Activated naive CD4-positive, alpha-beta T cell treated with anti-CD3 and anti-CD28 coated beads for 36 hours (primary cell): ENCODE measurements at regions of chr18 and their contacts with region 1.

Region 1: DNA sequence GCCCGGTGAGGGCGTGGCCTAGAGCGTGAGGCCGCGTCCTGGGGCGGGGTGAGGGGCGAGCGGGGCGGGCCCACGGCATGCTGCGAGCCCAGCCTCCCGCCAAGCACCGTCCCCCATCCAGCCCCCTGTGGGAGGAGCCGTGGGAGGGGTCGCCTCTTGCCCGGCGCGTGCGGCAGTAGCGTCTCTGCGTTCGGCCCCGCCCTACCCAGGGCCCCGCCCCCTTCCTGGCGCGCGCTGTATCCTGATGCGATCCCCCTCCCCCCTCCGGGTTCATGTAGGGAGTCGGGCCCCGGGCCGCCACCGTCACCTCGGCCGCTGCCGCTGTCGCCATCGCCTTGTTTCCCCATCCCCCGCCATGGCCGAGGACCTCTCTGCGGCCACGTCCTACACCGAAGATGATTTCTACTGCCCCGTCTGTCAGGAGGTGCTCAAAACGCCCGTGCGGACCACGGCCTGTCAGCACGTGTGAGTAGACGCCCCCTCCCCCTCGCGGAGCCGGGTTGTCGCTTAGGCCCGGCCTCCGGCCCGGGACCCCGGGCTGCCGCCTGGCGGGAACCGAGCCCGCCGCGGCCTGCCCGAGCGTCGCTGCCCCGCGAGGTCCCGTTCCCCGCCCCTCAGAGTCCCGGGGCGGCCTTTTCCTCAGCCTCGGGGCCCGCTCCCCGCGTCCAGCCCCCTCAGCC is 888 bp downstream of the RNF138 start:
- DNase-seq: peak; percentile 99
- H3K4me3 Mint-ChIP-seq: peak overlapping the region; percentile 97
- H3K27ac Mint-ChIP-seq: peak overlapping the region; percentile 98
- H3K4me1 Mint-ChIP-seq: peaks cover 42% of the 10 kb centered on the region
- H3K27me3 Mint-ChIP-seq: no peaks in the 10 kb centered on the region

Region 2: GRCh38 chr18:31497837-31498573 is 594.6 kb before region 1 on chr18 and contains the start of gene DSG2:
- CTCF ChIA-PET with region 1: no interaction called
- intact Hi-C with region 1: loop called (anchors 10 kb)
- DNase-seq: peak; percentile 39
- H3K4me3 Mint-ChIP-seq: peak within 1 kb of the TSS; percentile 73
- H3K27ac Mint-ChIP-seq: no peak within 1 kb of the TSS
- H3K4me1 Mint-ChIP-seq: peaks cover 6% of the 10 kb centered on the region
- H3K27me3 Mint-ChIP-seq: peaks cover 39% of the 10 kb centered on the region
- total RNA-seq, gene DSG2: 0.45 to 0.49 TPM

Region 3: DNA sequence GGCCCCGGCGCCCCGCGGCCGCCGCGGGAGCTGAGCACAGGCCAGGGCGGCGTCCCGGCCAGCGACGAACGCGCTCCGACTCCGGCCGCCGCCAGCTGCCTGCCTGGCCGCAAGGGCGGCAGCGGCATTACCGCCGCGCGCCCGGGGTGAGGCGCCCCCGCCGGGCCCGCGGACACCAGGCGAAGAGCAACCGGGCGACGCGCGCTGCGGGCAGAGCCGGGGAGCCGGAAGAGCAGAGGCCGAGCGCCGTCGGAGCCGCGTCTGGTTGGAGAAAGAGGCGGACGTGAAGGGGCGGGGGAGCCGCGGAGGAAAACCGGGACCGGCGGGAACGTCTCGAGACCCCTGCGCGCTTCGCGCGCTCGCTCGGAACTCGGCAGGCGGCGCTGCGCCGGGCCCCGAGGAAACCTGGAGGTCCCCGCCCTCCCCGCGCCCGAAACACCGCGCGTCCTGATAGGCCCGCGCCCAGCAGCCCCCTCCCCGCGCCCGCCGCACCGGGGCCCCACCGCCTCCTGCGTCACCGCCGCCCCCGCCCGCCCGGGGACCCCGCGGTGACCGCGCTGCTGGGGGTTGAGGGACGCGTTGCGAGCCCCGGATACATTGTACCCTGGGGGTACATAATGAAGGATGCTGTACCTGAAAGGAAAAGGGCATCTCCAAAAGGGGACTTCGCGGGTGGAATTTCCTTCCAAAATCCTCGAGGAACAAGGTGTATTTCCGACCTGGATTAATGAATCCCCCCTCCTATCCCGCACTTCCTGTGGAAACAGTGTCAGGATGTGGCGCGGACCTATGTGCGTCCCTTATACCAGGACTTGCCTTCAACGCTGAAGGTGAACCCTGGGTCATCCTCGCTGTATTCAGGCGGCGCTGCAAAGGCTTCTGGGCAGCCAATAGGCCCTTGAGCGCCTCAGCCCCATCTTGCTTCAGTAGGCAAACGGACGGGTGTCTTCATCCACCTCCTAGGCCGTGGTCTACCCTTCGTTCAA is 407.2 kb before region 1 on chr18:
- CTCF ChIA-PET with region 1: no interaction called
- intact Hi-C with region 1: loop called (anchors 1 kb)
- DNase-seq: peak; percentile 73
- H3K4me3 Mint-ChIP-seq: peak overlapping the region; percentile 84
- H3K27ac Mint-ChIP-seq: no peak overlapping the region
- H3K4me1 Mint-ChIP-seq: peaks cover 16% of the 10 kb centered on the region
- H3K27me3 Mint-ChIP-seq: peaks cover 38% of the 10 kb centered on the region

Region 4: DNA sequence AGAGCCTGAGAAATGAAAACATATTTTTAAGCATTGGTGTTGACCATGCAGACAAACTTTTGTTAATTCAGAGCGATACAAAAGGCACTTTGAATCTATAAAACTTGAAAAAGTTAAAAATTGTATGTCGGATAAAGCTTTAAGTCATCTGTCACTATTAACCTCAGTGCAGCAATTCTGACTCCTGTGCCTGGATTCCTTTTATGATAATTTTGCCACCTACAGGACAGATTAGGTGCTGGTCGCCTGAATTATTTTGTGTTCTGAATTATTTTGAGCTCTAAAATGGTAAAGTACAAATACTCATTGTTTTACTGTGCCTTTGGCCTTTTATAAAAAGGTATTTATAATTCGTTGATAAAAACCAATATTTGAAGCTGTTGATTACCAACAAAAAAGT is 20.2 kb before region 1 on chr18:
- CTCF ChIA-PET with region 1: interaction called, 10 read pairs
- intact Hi-C with region 1: loop called (anchors 1 kb)
- DNase-seq: no peak
- H3K4me3 Mint-ChIP-seq: no peak overlapping the region
- H3K27ac Mint-ChIP-seq: no peak overlapping the region
- H3K4me1 Mint-ChIP-seq: peaks cover 8% of the 10 kb centered on the region
- H3K27me3 Mint-ChIP-seq: no peaks in the 10 kb centered on the region

Region 5: DNA sequence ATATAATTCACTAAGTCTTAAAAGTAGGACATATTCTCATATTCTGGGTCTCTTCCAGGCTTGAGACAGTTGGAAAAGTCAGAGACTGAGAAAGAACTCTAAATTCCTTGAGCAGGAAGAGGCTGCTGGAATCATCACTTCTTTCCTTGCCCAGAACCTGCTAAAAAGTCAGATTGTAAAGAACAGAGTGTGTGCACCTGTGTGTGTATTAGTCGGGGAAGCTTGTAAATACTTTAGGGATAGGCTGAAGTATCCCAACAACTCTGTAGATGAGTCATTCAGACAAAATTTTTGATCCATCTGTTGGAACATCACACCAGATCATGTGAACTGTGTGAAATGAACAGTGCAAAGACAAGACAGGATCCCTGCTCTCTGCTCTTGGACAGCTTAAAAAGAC is 362.0 kb after region 1 on chr18:
- CTCF ChIA-PET with region 1: no interaction called
- intact Hi-C with region 1: no loop called
- DNase-seq: no peak
- H3K4me3 Mint-ChIP-seq: no peak overlapping the region
- H3K27ac Mint-ChIP-seq: no peak overlapping the region
- H3K4me1 Mint-ChIP-seq: no peaks in the 10 kb centered on the region
- H3K27me3 Mint-ChIP-seq: peaks cover 37% of the 10 kb centered on the region

Region 6: GRCh38 chr18:32470713-32471633 is 378.4 kb after region 1 on chr18 and contains the start of gene GAREM1:
- CTCF ChIA-PET with region 1: interaction called, 3 read pairs
- intact Hi-C with region 1: loop called (anchors 1 kb)
- DNase-seq: peak; percentile 91
- H3K4me3 Mint-ChIP-seq: peak within 1 kb of the TSS; percentile 77
- H3K27ac Mint-ChIP-seq: no peak within 1 kb of the TSS
- H3K4me1 Mint-ChIP-seq: peaks cover 28% of the 10 kb centered on the region
- H3K27me3 Mint-ChIP-seq: peaks cover 36% of the 10 kb centered on the region
- total RNA-seq, gene GAREM1: 0.31 to 0.35 TPM